B cell (primary cell): ENCODE measurements at regions of chr12 and their contacts with region 1.

Region 1: GRCh38 chr12:12803186-12803585 is 10.0 kb upstream of the DDX47 start:
- DNase-seq: peak; percentile 45
- ATAC-seq: peak; percentile 51
- H3K4me3 ChIP-seq: no peak overlapping the region
- H3K4me3 Mint-ChIP-seq: peak overlapping the region; percentile 80
- H3K27ac ChIP-seq: no peak overlapping the region
- H3K27ac Mint-ChIP-seq: peak overlapping the region; percentile 86
- H3K4me1 ChIP-seq: peaks cover 23 to 45% of the 10 kb centered on the region in 2 donors
- H3K4me1 Mint-ChIP-seq: peaks cover 56% of the 10 kb centered on the region
- H3K27me3 ChIP-seq: no peaks in the 10 kb centered on the region
- H3K27me3 Mint-ChIP-seq: no peaks in the 10 kb centered on the region
- CTCF ChIP-seq: no peak

Region 2: GRCh38 chr12:12562585-12563261 is 240.5 kb before region 1 on chr12 and contains the start of gene DUSP16:
- CTCF ChIA-PET with region 1: no interaction called
- POLR2A ChIA-PET with region 1: no interaction called
- intact Hi-C with region 1: loop called (anchors 2 kb)
- DNase-seq: peak; percentile 90
- ATAC-seq: peak; percentile 70
- H3K4me3 ChIP-seq: peak within 1 kb of the TSS; percentile 55 to 78 (median 72)
- H3K4me3 Mint-ChIP-seq: peak within 1 kb of the TSS; percentile 95
- H3K27ac ChIP-seq: peak within 1 kb of the TSS; percentile 38 to 82
- H3K27ac Mint-ChIP-seq: peak within 1 kb of the TSS; percentile 92
- H3K4me1 ChIP-seq: peaks cover 17 to 18% of the 10 kb centered on the region in 2 donors
- H3K4me1 Mint-ChIP-seq: peaks cover 20% of the 10 kb centered on the region
- H3K27me3 ChIP-seq: peaks cover 0 to 9% (median 3%) of the 10 kb centered on the region in 4 experiments
- H3K27me3 Mint-ChIP-seq: peaks cover 8% of the 10 kb centered on the region
- CTCF ChIP-seq: no peak
- total RNA-seq, gene DUSP16: 5.6 and 5.9 TPM in 2 replicates

Region 3: GRCh38 chr12:12696562-12697383 is 106.4 kb before region 1 on chr12:
- CTCF ChIA-PET with region 1: interaction called, 4 read pairs
- POLR2A ChIA-PET with region 1: interaction called, 10 read pairs
- intact Hi-C with region 1: no loop called
- DNase-seq: peak; percentile 95
- ATAC-seq: peak; percentile 86
- H3K4me3 ChIP-seq: peak overlapping the region; percentile 66 to 77 (median 68)
- H3K4me3 Mint-ChIP-seq: peak overlapping the region; percentile 99
- H3K27ac ChIP-seq: peak overlapping the region; percentile 97 to 98
- H3K27ac Mint-ChIP-seq: peak overlapping the region; percentile 100
- H3K4me1 ChIP-seq: peaks cover 15 to 23% of the 10 kb centered on the region in 2 donors
- H3K4me1 Mint-ChIP-seq: peaks cover 32% of the 10 kb centered on the region
- H3K27me3 ChIP-seq: no peaks in the 10 kb centered on the region
- H3K27me3 Mint-ChIP-seq: no peaks in the 10 kb centered on the region
- CTCF ChIP-seq: no peak

Region 4: DNA sequence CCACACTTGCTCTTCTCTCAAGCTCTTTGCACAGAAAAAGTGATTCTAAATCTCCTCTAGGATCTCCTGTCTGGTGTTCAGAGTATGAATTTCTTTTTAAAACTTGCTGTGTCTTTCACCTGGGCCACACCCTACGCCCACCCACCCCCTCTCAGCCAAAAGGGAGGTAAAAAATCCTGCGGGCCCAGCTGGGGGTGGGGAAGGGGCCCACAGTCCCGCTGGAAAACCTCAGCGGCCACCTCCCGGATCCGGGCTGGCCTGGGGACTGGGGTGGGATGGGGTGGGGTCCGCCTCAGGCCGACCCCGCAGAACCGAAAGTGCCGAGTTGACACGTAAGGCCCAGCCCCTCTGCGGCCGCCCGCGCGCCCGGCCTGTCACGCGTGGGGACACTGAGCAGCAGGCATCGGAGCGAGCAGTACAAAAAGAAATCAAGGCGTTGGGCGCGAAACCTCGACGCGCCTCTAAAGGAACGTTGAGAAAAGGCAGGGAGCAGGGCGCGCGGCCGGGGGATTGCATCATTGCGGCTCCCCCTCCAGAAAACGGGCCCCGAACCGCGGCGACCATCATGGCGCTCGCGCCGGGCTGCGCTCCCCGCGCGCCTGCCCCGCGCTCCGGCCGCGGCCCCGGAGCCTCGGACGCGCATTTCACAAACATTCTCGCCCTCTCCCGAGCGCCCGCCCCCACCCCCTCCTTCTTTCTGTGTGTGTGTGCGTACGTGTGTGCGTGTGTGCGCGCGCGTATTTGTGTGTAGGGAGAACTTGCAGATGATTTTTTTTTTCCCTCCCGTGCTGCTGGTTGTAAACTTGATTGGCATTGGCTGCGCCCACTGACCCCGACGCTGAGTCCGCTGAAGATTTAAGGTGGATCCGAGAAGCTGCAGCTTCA is 78.3 kb before region 1 on chr12:
- CTCF ChIA-PET with region 1: no interaction called
- POLR2A ChIA-PET with region 1: interaction called, 6 read pairs
- intact Hi-C with region 1: loop called (anchors 2 kb)
- DNase-seq: no peak
- ATAC-seq: peak; percentile 65
- H3K4me3 ChIP-seq: peak overlapping the region; percentile 74 to 88 (median 78)
- H3K4me3 Mint-ChIP-seq: peak overlapping the region; percentile 87
- H3K27ac ChIP-seq: peak overlapping the region; percentile 94 to 97
- H3K27ac Mint-ChIP-seq: peak overlapping the region; percentile 94
- H3K4me1 ChIP-seq: peaks cover 22 to 30% of the 10 kb centered on the region in 2 donors
- H3K4me1 Mint-ChIP-seq: peaks cover 52% of the 10 kb centered on the region
- H3K27me3 ChIP-seq: no peaks in the 10 kb centered on the region
- H3K27me3 Mint-ChIP-seq: no peaks in the 10 kb centered on the region
- CTCF ChIP-seq: peak; percentile 10

Region 5: GRCh38 chr12:13100882-13101769 is 297.9 kb after region 1 on chr12:
- CTCF ChIA-PET with region 1: no interaction called
- POLR2A ChIA-PET with region 1: no interaction called
- intact Hi-C with region 1: loop called (anchors 1 kb)
- DNase-seq: peak; percentile 97
- ATAC-seq: peak; percentile 77
- H3K4me3 ChIP-seq: peak overlapping the region; percentile 39 to 82 (median 71)
- H3K4me3 Mint-ChIP-seq: peak overlapping the region; percentile 88
- H3K27ac ChIP-seq: peak overlapping the region; percentile 97 to 99
- H3K27ac Mint-ChIP-seq: peak overlapping the region; percentile 96
- H3K4me1 ChIP-seq: peaks cover 52 to 63% of the 10 kb centered on the region in 2 donors
- H3K4me1 Mint-ChIP-seq: peaks cover 62% of the 10 kb centered on the region
- H3K27me3 ChIP-seq: no peaks in the 10 kb centered on the region
- H3K27me3 Mint-ChIP-seq: no peaks in the 10 kb centered on the region
- CTCF ChIP-seq: no peak